ENCODE measurements at regions of chr9 and their contacts with region 1.

Region 1: DNA sequence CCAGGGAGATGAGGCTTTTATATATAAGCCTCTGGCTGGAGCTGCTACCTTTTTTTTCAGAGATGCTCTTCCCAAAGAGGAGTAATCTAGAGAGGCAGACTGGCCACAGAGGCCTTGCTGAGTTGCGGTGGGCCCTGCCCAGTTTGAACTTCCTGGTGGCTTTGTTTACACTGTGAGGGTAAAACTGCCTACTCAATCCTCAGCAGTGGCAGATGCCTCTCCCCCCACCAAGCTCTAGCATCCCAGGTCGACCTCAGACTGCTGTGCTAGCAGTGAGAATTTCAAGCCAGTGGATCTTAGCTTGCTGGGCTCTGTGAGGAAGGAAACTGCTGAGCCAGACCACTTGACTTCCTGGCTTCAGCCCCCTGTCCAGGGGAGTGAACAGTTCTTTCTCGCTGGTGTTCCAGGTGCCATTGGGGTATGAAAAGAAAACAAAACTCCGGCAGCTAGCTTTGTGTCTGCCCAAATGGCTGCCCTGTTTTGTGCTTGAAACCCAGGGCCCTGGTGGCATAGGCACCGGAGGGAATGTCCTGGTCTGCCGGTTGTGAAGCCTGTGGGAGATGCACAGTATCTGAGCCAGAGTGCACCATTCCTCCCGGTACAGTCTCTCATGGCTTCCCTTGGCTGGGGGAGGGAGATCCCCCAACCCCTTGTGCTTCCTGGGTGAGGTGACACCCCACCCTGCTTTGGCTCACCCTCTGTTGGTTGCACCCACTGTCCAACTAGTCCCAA is 219.5 kb upstream of the IZUMO3 start:
- DNase-seq: peak in 1 of 2 donors; percentile 37
- ATAC-seq: no peak
- H3K4me3 ChIP-seq: no peak overlapping the region
- H3K27ac ChIP-seq: no peak overlapping the region
- H3K4me1 ChIP-seq: no peaks in the 10 kb centered on the region
- H3K27me3 ChIP-seq: no peaks in the 10 kb centered on the region

Region 2: DNA sequence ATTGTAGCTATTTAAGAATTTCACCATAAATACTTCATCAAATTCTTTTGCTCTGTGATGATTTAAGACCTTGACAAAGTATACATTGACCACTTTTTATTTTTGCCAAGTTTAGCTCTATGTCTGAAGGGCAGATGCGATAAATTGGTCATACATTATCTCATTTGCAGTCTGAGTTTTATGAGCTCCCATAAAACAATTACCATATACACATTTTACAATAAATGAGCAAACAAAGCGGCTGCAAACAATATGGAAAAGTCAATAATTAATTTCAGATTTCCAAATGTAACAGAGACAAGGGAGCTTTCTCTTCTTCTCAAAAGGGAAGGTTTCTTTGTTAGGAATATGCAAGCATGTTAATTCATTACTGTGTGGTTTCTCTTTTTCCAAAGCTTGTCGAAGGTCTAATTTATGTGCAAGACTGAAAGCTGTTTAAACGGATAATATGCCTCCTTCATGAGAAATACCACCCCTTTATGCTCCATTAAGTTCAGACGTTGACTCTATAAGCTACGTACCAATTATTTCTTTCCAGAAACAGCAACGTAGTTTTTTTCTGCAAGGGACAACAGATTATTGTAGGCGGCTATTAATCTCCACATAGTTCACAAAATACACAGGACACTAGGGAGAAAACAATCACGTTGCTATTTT is 212.5 kb before region 1 on chr9:
- intact Hi-C with region 1: no loop called
- DNase-seq: no peak
- ATAC-seq: no peak
- H3K4me3 ChIP-seq: no peak overlapping the region
- H3K27ac ChIP-seq: no peak overlapping the region
- H3K4me1 ChIP-seq: no peaks in the 10 kb centered on the region
- H3K27me3 ChIP-seq: no peaks in the 10 kb centered on the region

Region 3: GRCh38 chr9:24824607-24825006 is 59.4 kb after region 1 on chr9:
- intact Hi-C with region 1: loop called in 1 of 2 experiments (anchors 5 kb)
- DNase-seq: no peak
- ATAC-seq: no peak
- H3K4me3 ChIP-seq: no peak overlapping the region
- H3K27ac ChIP-seq: no peak overlapping the region
- H3K4me1 ChIP-seq: no peaks in the 10 kb centered on the region
- H3K27me3 ChIP-seq: no peaks in the 10 kb centered on the region